HepG2 (cell line): ENCODE measurements at regions of chr14 and their contacts with region 1.

Region 1: GRCh38 chr14:34322940-34323418 is 139.1 kb downstream of the SPTSSA start:
- DNase-seq: peak; percentile 87
- ATAC-seq: peak; percentile 87
- H3K4me3 ChIP-seq: no peak overlapping the region
- H3K27ac ChIP-seq: no peak overlapping the region
- H3K4me1 ChIP-seq: 0 out of 2 replicates have a peak, but pooled peaks cover 6% of the 10 kb centered on the region
- H3K27me3 ChIP-seq: no peaks in the 10 kb centered on the region
- CTCF ChIP-seq: peak; percentile 89
- EP300 ChIP-seq: no peak
- POLR2A ChIP-seq: no peak
- RAD21 ChIP-seq: peak; percentile 41; the same call in 1 of the 2 replicates

Region 2: DNA sequence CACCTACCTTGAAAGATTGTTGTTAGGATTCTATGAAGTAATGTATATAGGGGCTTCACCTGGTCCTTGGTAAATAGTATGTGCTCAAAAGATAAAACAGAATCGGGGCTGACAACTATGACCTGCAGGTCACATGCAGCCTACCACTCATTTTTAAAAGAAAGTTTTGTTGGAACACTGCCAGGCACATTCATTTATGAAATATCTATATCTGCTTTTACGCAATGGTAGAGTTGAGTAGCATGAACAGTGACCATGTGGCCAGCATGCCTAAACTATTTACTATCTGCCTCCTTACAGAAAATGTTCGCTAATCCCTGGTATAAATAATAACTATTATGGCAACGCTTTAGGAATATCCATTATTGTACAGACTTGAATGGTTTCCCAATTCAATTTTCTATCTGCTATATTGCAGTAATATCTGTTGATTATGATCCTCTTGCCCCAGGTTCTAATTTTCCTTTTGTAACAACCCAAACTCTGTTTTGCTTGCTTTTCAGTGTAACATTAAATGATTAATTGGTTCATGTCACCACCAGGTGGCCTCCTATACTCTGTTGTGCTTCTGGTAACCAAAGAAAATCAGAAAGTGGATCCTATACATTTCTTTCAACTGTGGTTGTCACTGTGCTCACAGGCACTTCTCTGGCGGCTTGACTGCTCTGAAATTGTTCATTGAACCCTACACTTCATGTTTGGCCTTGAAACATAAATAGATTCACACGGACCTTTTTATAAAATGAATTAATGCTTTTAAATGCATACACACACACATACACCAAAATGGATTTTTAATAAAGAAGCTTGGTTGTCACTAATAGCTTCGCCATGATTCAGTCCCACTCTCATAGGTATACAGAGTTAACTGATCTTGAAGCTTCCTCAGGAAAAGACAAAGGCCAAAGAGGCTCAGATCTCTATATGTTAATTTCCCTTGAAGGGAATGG is 1612.0 kb before region 1 on chr14:
- CTCF ChIA-PET with region 1: interaction called, 4 read pairs
- POLR2A ChIA-PET with region 1: no interaction called
- in situ Hi-C with region 1: loop called (anchors 25 kb)
- intact Hi-C with region 1: loop called (anchors 1 kb)
- DNase-seq: peak; percentile 62
- ATAC-seq: peak; percentile 94
- H3K4me3 ChIP-seq: no peak overlapping the region
- H3K27ac ChIP-seq: no peak overlapping the region
- H3K4me1 ChIP-seq: no peaks in the 10 kb centered on the region
- H3K27me3 ChIP-seq: no peaks in the 10 kb centered on the region
- CTCF ChIP-seq: peak; percentile 79
- EP300 ChIP-seq: no peak
- POLR2A ChIP-seq: no peak
- RAD21 ChIP-seq: no peak

Region 3: GRCh38 chr14:33848706-33849454 is 474.1 kb before region 1 on chr14:
- CTCF ChIA-PET with region 1: interaction called, 6 read pairs
- POLR2A ChIA-PET with region 1: no interaction called
- in situ Hi-C with region 1: no loop called
- intact Hi-C with region 1: loop called (anchors 1 kb)
- DNase-seq: peak; percentile 81
- ATAC-seq: peak; percentile 97
- H3K4me3 ChIP-seq: no peak overlapping the region
- H3K27ac ChIP-seq: no peak overlapping the region
- H3K4me1 ChIP-seq: peaks cover 4% of the 10 kb centered on the region; the same call in 1 of the 2 replicates
- H3K27me3 ChIP-seq: peaks cover 0 to 5% of the 10 kb centered on the region in 2 experiments; a peak in 1 of 5 replicates
- CTCF ChIP-seq: peak; percentile 89
- EP300 ChIP-seq: no peak
- POLR2A ChIP-seq: no peak
- RAD21 ChIP-seq: peak; percentile 95

Region 4: DNA sequence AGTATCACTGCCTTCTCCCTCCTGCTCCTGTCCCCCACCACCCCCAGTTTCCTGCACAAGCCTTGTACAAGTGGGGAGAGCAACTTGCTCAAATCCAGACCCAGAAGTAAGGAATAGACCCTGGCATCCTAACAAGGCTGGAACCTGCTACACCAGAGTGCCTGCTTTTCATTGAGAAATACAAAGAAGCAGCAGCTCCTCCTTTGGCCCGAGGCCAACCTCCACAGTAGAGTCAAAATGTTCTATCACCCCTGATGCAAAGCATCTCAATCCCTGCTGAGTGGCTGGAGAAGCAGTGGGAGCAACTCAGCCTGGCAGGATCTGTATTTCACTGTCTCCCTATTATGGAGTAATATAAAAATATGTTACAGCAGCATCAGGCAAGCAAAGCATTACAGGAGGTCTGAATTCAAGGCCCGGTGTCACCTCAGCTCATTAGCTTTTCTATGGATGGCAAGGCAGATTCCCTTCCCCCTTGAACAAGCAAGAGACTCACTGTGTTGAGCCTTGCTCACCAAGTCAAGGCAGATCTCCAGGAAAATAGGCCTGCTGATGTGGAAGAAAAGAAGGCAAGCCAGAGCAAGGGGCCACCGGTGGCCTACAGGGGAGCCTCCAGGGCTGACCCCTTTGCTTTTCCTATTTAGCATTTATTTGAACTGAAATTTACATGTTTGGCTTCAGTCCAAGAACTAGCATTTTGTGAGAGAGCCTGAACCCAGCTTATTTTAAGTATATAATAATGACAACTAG is 185.8 kb before region 1 on chr14:
- CTCF ChIA-PET with region 1: no interaction called
- POLR2A ChIA-PET with region 1: no interaction called
- in situ Hi-C with region 1: no loop called
- intact Hi-C with region 1: loop called (anchors 2 kb)
- DNase-seq: no peak
- ATAC-seq: no peak
- H3K4me3 ChIP-seq: no peak overlapping the region
- H3K27ac ChIP-seq: no peak overlapping the region
- H3K4me1 ChIP-seq: peaks cover 33% of the 10 kb centered on the region
- H3K27me3 ChIP-seq: peaks cover 0 to 8% of the 10 kb centered on the region in 2 experiments; a peak in 3 of 5 replicates
- CTCF ChIP-seq: no peak
- EP300 ChIP-seq: no peak
- POLR2A ChIP-seq: no peak
- RAD21 ChIP-seq: no peak